ENCODE measurements at regions of chr2 and their contacts with region 1.

Region 1: DNA sequence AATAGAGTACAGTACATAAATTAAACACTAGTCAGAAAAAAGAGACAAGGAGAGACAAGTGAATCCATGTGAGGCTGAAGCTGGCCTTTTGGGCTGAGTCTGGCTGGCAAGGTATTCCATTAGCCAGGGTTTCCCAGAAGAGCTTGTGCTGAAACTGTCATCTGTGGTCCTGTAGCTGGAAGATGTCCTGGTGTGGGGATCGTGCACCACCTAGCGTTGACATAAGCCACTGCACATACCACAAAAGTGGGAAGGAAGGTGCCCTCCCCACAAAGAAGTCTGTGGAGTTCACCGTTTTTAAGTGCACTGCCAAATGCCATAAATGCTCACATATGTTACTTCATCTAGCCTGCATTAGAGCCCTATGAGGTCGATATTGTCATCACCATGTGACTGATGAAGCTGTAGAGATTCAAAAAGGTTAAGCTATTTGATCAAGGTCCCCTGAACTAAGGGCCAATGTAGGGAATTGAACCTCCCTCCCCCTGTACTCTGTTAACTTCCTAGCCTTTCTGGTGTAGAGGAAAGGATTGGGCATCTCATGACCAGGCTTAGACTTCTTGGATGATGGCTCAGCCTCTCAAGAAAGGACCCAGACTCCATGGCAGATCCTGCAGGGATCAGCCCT is 31.9 kb upstream of the GALNT14 start:
- DNase-seq: peak; percentile 69
- H3K4me3 Mint-ChIP-seq: no peak overlapping the region
- H3K27ac Mint-ChIP-seq: no peak overlapping the region
- H3K4me1 Mint-ChIP-seq: no peaks in the 10 kb centered on the region
- H3K27me3 Mint-ChIP-seq: peaks cover 67% of the 10 kb centered on the region
- CTCF ChIP-seq: peak; percentile 88

Region 2: DNA sequence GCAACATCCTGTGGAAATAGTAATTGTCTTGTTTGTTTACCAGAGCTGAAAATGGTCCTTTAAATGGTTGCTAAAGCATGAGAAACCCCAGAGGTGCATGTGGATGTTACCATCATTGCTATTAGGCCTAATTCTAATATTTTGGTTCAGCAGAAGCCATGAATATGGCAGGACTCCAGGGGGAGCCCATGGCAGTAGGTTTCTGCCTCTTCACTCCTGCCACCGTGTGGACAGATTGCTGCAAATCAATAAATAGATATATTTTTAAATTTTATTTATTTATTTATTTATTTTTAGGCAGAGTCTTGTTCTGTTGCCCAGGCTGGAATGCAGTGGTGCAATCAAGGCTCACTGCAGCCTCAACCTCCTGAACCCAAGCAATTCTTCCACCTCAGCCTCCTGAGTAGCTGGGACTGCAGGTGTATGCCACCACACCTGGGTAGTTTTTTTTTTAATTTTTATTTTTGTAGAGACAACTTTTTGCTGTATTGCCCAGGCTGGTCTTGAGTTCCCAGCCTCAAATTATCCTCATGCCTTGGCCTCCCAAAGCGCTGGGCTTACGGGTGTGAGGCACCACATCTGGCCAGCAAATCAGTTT is 308.0 kb before region 1 on chr2:
- CTCF ChIA-PET with region 1: interaction called, 11 read pairs
- intact Hi-C with region 1: loop called (anchors 2 kb)
- DNase-seq: peak; percentile 74
- H3K4me3 Mint-ChIP-seq: no peak overlapping the region
- H3K27ac Mint-ChIP-seq: no peak overlapping the region
- H3K4me1 Mint-ChIP-seq: no peaks in the 10 kb centered on the region
- H3K27me3 Mint-ChIP-seq: peaks cover 20% of the 10 kb centered on the region
- CTCF ChIP-seq: peak; percentile 81

Region 3: DNA sequence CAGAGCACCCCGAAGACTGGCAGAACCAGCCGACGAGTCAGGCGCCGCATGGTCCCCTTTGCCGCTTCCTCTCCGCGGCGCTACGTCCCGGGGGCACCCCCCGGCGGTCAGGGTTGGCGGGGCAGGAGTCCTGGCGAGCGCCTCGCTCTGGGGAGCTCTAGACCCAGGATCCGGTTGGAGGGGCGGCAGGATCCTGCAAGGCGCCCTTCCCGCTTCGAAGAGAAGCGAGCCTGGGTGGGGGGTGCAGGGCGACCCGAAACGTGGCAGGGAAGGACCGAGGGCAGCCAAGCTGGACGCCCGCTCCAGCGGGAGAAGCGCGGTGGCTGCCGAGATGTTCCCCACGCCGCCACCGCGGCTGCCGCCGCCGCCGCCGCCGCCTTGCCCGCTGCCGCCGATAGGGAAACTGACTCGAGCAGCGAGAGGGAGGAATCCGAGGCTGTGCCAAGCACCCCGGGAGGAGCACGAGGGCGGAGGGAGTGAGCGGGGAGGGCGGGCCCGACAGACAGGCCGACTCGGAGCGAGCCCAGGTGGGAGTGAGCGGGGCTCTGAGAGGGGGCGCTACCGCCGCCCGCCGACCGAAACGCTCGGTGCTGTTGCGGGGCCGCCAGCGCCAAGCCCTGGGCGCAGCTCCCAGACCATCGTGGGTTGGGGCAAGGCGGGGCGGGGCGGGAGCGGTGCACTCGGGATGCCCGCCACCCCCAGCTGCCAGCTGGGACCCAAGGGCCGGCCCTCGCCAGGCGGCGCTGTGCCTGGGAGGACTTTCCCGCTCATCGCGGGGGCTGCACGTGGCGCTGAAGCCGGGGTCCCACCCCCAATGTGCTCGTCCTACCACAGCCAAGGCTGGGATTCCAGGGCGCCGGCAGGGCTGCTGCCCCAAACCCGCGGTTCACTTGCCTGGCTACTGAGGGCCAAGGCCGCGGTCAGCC is 31.9 kb before region 1 on chr2 and contains the start of gene GALNT14:
- CTCF ChIA-PET with region 1: interaction called, 25 read pairs
- intact Hi-C with region 1: no loop called
- DNase-seq: peak; percentile 93
- H3K4me3 Mint-ChIP-seq: peak within 1 kb of the TSS; percentile 97
- H3K27ac Mint-ChIP-seq: peak within 1 kb of the TSS; percentile 64
- H3K4me1 Mint-ChIP-seq: peaks cover 39% of the 10 kb centered on the region
- H3K27me3 Mint-ChIP-seq: peaks cover 26% of the 10 kb centered on the region
- CTCF ChIP-seq: peak; percentile 78
- total RNA-seq, gene GALNT14: 50.3 and 61.9 TPM in 2 replicates

Region 4: GRCh38 chr2:31151501-31151900 is 18.7 kb before region 1 on chr2:
- CTCF ChIA-PET with region 1: interaction called, 10 read pairs
- intact Hi-C with region 1: no loop called
- DNase-seq: no peak
- H3K4me3 Mint-ChIP-seq: no peak overlapping the region
- H3K27ac Mint-ChIP-seq: no peak overlapping the region
- H3K4me1 Mint-ChIP-seq: no peaks in the 10 kb centered on the region
- H3K27me3 Mint-ChIP-seq: peaks cover 86% of the 10 kb centered on the region
- CTCF ChIP-seq: no peak

Region 5: GRCh38 chr2:31188131-31188530 is 17.9 kb after region 1 on chr2:
- CTCF ChIA-PET with region 1: no interaction called
- intact Hi-C with region 1: no loop called
- DNase-seq: no peak
- H3K4me3 Mint-ChIP-seq: no peak overlapping the region
- H3K27ac Mint-ChIP-seq: no peak overlapping the region
- H3K4me1 Mint-ChIP-seq: no peaks in the 10 kb centered on the region
- H3K27me3 Mint-ChIP-seq: peaks cover 76% of the 10 kb centered on the region
- CTCF ChIP-seq: no peak

Region 6: DNA sequence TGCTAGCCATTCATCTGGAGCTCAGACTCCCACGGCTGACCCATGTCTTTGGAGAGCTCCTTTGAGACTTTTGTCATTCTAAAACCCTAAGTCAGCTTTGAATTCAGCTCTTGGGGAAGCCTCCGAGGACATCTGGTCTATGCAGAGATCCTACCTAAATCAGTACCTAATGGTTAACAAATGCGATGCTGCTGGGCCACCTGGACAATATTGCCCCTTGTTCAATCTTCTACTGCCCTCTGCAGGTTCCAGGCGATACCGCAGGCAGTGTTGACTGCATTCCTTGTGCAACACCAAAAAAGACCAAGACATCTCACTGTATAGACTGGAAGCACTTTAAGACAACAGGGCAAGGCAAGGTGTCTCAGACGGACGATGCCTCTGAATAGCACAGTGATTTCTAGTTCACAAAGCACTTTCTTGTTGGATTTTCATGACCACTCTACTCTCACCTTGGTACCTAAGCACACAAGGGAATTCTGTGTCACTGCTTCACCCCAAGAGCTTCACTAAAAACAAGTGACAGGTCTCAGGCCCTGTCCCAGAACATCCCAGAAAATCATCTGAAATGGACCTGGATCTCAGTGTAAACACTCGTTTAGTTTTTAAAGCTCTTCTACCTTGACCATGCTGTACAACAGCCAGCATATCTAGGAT is 163.5 kb after region 1 on chr2:
- CTCF ChIA-PET with region 1: interaction called, 3 read pairs
- intact Hi-C with region 1: loop called (anchors 1 kb)
- DNase-seq: peak; percentile 86
- H3K4me3 Mint-ChIP-seq: no peak overlapping the region
- H3K27ac Mint-ChIP-seq: no peak overlapping the region
- H3K4me1 Mint-ChIP-seq: peaks cover 28% of the 10 kb centered on the region
- H3K27me3 Mint-ChIP-seq: no peaks in the 10 kb centered on the region
- CTCF ChIP-seq: peak; percentile 82

Measured in Calu3 (cell line).